Activated CD4-positive, alpha-beta memory T cell treated with anti-CD3 and anti-CD28 coated beads for 36 hours (primary cell): ENCODE measurements at regions of chr9 and their contacts with region 1.

Region 1: GRCh38 chr9:125746017-125746773 is 978 bp upstream of the PBX3 start:
- DNase-seq: peak; percentile 95
- H3K4me3 Mint-ChIP-seq: peak overlapping the region; percentile 86
- H3K27ac Mint-ChIP-seq: peak overlapping the region; percentile 95
- H3K4me1 Mint-ChIP-seq: peaks cover 31% of the 10 kb centered on the region
- H3K27me3 Mint-ChIP-seq: peaks cover 3% of the 10 kb centered on the region

Region 2: DNA sequence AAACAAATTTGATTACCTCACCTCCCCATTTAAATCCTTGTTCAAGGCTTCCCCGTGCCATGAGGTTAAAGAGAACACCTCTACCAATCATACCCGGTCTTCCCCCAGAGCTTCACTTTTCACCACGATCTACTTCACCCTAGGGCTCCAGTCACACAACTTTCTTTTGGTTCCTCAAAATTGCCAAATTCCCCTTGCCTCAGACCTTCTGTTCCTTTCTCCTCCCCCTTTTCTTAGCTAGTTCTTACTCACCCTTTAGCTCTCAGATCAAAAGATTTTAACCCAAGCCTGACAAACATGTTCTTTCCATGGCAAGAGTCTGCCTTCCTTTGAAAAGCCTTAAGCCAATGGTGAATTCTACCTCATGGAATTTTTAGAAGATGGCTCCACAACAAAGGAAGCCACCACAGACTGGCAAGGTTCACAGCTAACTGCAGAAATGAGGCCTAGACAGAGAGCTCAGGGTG is 95.9 kb before region 1 on chr9:
- CTCF ChIA-PET with region 1: no interaction called
- POLR2A ChIA-PET with region 1: no interaction called
- intact Hi-C with region 1: loop called (anchors 5 kb)
- DNase-seq: peak; percentile 42
- H3K4me3 Mint-ChIP-seq: peak overlapping the region; percentile 14
- H3K27ac Mint-ChIP-seq: peak overlapping the region; percentile 62
- H3K4me1 Mint-ChIP-seq: peaks cover 66% of the 10 kb centered on the region
- H3K27me3 Mint-ChIP-seq: no peaks in the 10 kb centered on the region

Region 3: DNA sequence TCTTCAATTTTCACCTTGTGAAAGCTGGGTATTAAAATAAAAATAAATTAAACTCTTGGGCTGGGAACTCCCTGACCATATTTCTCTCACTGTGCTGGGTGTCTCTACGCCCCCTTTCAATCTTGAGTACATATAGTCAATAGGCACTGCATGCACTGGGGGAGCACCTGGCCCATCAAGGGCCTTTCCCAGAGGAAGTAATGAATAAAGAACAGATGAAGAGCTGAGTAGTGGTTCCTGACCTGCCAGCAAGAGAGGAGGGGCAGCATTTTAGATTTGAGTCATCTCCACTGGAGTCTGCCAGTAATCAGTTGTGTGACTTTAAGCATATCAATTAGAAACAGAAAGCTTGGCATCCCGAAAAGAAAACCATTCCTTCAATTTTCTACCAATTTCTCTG is 45.4 kb before region 1 on chr9:
- CTCF ChIA-PET with region 1: no interaction called
- POLR2A ChIA-PET with region 1: interaction called, 3 read pairs
- intact Hi-C with region 1: loop called (anchors 1 kb)
- DNase-seq: peak; percentile 71
- H3K4me3 Mint-ChIP-seq: peak overlapping the region; percentile 3
- H3K27ac Mint-ChIP-seq: peak overlapping the region; percentile 44
- H3K4me1 Mint-ChIP-seq: peaks cover 55% of the 10 kb centered on the region
- H3K27me3 Mint-ChIP-seq: no peaks in the 10 kb centered on the region

Region 4: GRCh38 chr9:125706661-125707471 is 39.3 kb before region 1 on chr9 and contains the start of gene MAPKAP1:
- CTCF ChIA-PET with region 1: interaction called, 3 read pairs
- POLR2A ChIA-PET with region 1: interaction called, 9 read pairs
- intact Hi-C with region 1: loop called (anchors 1 kb)
- DNase-seq: peak; percentile 97
- H3K4me3 Mint-ChIP-seq: peak within 1 kb of the TSS; percentile 77
- H3K27ac Mint-ChIP-seq: peak within 1 kb of the TSS; percentile 77
- H3K4me1 Mint-ChIP-seq: peaks cover 37% of the 10 kb centered on the region
- H3K27me3 Mint-ChIP-seq: no peaks in the 10 kb centered on the region
- total RNA-seq, gene MAPKAP1: 55.3 to 57.9 TPM

Region 5: GRCh38 chr9:125785248-125785751 is 39.1 kb after region 1 on chr9:
- CTCF ChIA-PET with region 1: no interaction called
- POLR2A ChIA-PET with region 1: no interaction called
- intact Hi-C with region 1: no loop called
- DNase-seq: peak; percentile 65
- H3K4me3 Mint-ChIP-seq: peak overlapping the region; percentile 1
- H3K27ac Mint-ChIP-seq: peak overlapping the region; percentile 38
- H3K4me1 Mint-ChIP-seq: peaks cover 22% of the 10 kb centered on the region
- H3K27me3 Mint-ChIP-seq: no peaks in the 10 kb centered on the region

Region 6: DNA sequence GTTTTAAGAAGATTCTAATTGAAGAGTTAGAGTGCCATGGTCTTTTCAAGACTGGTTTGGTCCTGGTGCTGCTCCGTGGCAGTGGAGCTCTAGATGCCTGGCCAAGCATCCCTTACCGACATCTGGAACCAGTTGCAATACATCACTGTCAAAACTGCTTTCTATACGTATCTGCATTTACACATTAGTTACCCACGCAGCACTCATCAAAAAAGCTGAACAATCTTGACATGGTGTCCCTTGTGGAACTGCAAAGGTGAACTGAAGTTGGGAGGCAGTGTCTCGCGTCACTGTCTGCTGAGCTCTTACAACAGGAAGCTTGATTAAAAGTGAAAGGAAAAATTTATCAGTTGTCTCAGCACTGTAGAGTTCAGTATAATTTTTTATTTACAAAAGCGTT is 83.5 kb after region 1 on chr9:
- CTCF ChIA-PET with region 1: no interaction called
- POLR2A ChIA-PET with region 1: no interaction called
- intact Hi-C with region 1: loop called (anchors 5 kb)
- DNase-seq: peak; percentile 60
- H3K4me3 Mint-ChIP-seq: peak overlapping the region; percentile 72
- H3K27ac Mint-ChIP-seq: peak overlapping the region; percentile 71
- H3K4me1 Mint-ChIP-seq: peaks cover 21% of the 10 kb centered on the region
- H3K27me3 Mint-ChIP-seq: no peaks in the 10 kb centered on the region

Region 7: DNA sequence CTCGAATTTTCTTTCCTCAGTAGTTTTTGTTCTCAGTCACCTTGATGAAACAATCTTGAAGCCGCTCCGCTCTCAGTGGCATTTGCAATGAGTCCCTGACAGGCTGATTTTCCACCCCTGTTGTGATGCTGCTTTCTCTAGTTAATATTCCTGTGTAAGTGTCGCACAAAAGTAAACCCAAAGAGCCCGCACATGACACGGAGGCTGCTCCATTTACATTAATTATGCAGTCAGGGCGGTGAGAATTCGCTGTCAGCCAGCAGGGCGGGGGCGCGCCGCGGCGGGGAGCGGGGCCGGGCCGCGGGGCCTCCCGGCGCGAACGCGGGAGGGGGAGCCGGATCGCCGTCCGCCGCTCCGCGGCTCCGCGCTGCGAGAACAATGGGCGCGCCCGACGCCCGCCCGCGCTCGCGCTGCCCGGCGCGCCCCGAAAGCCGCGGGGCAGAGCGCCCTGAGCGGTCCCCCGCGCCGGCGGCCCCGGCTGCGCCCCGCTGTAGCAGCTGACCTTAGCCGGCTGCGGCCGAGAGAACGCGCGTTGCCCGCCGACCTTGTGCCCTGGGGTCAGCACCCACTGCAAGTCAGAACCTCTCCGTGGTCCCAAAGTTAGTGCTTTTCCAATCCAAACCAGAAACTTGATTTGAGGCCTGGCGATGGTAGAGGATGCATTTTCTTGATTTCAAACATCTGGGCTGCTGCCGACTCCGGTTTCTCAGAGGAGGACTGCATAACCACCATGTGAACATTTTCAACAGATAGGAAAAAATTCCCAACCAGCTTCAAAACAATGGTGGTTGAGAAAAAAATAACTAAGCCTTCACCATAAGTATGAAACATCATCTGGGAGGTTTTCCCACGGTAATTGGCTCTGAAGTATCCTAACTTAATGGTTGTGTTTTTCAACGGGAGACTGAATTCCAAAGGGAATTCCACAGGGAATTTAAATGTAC is 143.6 kb after region 1 on chr9:
- CTCF ChIA-PET with region 1: no interaction called
- POLR2A ChIA-PET with region 1: no interaction called
- intact Hi-C with region 1: loop called (anchors 5 kb)
- DNase-seq: peak; percentile 35
- H3K4me3 Mint-ChIP-seq: peak overlapping the region; percentile 63
- H3K27ac Mint-ChIP-seq: no peak overlapping the region
- H3K4me1 Mint-ChIP-seq: peaks cover 9% of the 10 kb centered on the region
- H3K27me3 Mint-ChIP-seq: peaks cover 25% of the 10 kb centered on the region

Region 8: DNA sequence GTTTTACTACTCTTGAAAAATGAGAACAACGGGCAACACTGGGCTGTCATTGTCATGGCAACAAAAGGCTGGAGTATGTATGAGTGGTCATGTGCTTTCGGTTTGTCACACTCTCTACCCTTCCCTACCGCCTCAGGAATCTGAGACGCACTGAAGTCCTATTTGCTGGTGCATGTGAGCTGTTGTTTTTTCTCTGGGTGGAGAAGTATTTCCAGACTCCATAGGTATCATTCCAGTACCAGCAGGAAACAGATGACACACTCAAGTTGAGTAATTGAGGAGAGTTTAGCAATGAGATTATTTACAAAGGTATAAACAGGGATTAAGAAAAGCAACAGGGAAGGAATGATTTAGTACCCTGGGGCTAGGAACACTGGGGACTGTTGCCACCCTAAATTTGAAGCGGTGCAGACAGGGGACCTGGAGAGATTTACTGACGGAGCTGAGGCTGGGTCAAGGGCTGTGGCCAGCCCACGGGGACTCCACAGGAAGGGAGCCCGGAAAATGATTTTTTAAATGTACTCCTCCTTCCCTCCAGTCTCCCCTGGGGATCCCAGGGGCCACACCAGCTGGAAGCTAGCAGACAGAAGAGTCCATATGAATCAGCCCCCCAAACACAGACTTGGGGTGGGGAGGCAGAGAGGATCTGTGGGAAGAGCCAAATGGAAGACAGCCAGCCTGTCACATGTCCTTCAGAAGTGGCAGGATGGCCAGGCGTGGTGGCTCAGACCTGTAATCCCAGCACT is 1045.4 kb after region 1 on chr9:
- CTCF ChIA-PET with region 1: no interaction called
- POLR2A ChIA-PET with region 1: no interaction called
- intact Hi-C with region 1: loop called (anchors 5 kb)
- DNase-seq: no peak
- H3K4me3 Mint-ChIP-seq: no peak overlapping the region
- H3K27ac Mint-ChIP-seq: no peak overlapping the region
- H3K4me1 Mint-ChIP-seq: peaks cover 4% of the 10 kb centered on the region
- H3K27me3 Mint-ChIP-seq: peaks cover 34% of the 10 kb centered on the region